ENCODE measurements at regions of chr5 and their contacts with region 1.

Region 1: DNA sequence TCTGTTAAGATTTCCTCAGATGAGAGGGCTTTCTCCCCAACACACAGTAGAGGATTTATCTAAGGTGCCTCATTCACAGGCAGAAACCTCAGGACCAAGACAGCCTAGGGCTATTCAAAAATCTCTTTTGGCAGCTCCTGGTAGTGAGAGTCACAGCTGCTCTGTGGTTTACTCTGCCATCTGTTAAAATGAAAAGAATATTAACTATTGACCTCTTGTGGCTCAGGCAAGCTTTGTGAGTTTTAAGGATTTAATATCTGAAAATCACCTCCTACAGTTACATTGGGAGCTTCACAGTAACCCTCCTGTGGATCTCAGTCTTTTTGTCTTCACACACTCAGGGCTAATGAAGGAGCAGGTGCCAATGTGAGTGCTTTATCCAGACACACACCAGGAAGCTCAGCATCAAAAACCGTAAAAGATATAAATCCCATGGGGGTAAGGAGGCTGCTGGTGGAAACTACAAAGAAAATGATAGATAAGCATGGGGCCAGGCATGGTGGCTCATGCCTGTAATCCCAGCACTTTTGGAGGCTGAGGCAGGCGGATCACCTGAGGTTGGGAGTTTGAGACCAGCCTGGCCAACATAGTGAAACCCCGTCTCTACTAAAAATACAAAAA is 29.7 kb downstream of the PPP1R2B start:
- DNase-seq: peak; percentile 89
- H3K4me3 ChIP-seq: peak overlapping the region; percentile 11
- H3K27ac ChIP-seq: peak overlapping the region; percentile 98
- H3K4me1 ChIP-seq: peaks cover 72% of the 10 kb centered on the region
- CTCF ChIP-seq: peak; percentile 47

Region 2: DNA sequence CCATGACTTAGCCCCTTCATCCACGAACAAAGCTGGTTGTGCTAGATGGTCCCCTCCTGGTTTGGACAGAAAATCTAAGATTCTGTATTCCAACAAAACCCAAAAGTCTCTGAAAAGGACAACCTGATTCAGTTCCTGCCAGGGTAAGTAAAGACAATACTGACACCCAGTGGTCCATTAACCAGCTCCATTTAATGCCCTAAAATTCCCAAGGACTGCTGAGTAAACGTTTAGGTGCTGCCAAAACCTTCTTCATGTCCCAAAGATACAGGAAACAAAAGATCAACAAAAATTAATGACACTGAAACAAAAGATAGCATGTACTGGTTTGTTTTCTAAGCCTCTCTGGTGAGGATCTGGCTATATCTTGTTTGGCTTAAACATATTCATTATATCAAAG is 55.0 kb before region 1 on chr5:
- CTCF ChIA-PET with region 1: no interaction called
- POLR2A ChIA-PET with region 1: interaction called, 7 read pairs
- intact Hi-C with region 1: loop called (anchors 1 kb)
- DNase-seq: peak; percentile 67
- H3K4me3 ChIP-seq: peak overlapping the region; percentile 48
- H3K27ac ChIP-seq: peak overlapping the region; percentile 77
- H3K4me1 ChIP-seq: peaks cover 89% of the 10 kb centered on the region
- CTCF ChIP-seq: peak; percentile 83

Region 3: DNA sequence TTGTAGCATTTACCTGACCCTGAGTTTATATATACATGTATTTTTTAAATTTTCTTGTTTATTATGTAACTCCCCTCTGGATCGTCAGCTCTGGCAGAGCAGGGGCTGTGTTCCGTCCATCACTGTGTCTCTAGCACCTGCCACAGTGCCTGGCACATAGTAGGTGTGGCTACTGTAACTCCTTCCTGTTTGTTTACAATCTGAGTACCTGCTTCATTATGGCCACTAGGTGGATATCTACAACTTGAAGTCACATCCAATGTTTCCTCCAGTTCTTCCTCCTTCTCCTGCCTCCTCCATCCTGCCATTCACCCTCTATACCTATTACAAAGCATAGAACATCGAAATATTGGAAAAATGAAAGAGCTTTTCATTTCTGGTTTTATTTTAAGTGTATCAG is 43.9 kb before region 1 on chr5:
- CTCF ChIA-PET with region 1: interaction called, 4 read pairs
- POLR2A ChIA-PET with region 1: interaction called, 44 read pairs
- intact Hi-C with region 1: loop called (anchors 2 kb)
- DNase-seq: peak; percentile 81
- H3K4me3 ChIP-seq: no peak overlapping the region
- H3K27ac ChIP-seq: peak overlapping the region; percentile 83
- H3K4me1 ChIP-seq: peaks cover 55% of the 10 kb centered on the region
- CTCF ChIP-seq: peak; percentile 86

Region 4: GRCh38 chr5:156865427-156865826 is 14.3 kb before region 1 on chr5:
- CTCF ChIA-PET with region 1: interaction called, 4 read pairs
- POLR2A ChIA-PET with region 1: interaction called, 100 read pairs
- intact Hi-C with region 1: no loop called
- DNase-seq: no peak
- H3K4me3 ChIP-seq: no peak overlapping the region
- H3K27ac ChIP-seq: no peak overlapping the region
- H3K4me1 ChIP-seq: peaks cover 26% of the 10 kb centered on the region
- CTCF ChIP-seq: no peak

Region 5: DNA sequence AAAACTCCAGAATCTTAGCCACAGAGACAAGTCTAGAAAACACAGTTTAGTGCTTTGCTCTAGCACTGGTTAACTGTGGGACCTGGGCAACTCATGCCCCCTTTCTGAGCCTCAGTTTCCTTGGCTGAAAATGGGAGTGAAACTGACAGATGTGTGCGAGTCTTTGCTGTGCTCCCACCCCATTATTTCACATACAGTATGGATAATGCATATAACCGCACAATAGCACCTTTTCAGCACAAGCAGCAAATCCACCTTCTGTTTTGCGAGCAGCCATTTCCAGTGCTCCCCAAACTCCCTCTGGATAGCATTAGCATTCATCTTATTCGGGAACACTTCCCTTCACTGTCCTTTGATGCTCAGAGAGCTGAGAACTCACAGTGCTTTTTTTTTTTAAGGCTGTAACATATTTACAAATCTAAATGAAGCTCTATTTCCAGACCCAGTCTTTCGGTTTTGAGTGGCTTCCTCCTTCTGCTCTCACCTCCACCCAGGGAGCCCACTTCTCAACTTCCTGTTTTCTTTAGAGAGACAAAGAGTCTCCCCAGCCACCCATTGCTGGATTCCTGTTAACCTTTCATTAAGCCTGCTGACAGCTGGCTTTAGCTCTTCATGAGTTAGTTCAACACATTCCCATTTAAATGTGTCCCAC is 34.1 kb after region 1 on chr5:
- CTCF ChIA-PET with region 1: interaction called, 4 read pairs
- POLR2A ChIA-PET with region 1: interaction called, 120 read pairs
- intact Hi-C with region 1: loop called (anchors 2 kb)
- DNase-seq: peak; percentile 92
- H3K4me3 ChIP-seq: peak overlapping the region; percentile 51
- H3K27ac ChIP-seq: peak overlapping the region; percentile 95
- H3K4me1 ChIP-seq: peaks cover 95% of the 10 kb centered on the region
- CTCF ChIP-seq: no peak

Region 6: GRCh38 chr5:156920042-156920860 is 40.5 kb after region 1 on chr5:
- CTCF ChIA-PET with region 1: no interaction called
- POLR2A ChIA-PET with region 1: interaction called, 120 read pairs
- intact Hi-C with region 1: loop called (anchors 2 kb)
- DNase-seq: no peak
- H3K4me3 ChIP-seq: peak overlapping the region; percentile 7
- H3K27ac ChIP-seq: peak overlapping the region; percentile 83
- H3K4me1 ChIP-seq: peaks cover 96% of the 10 kb centered on the region
- CTCF ChIP-seq: no peak

Region 7: DNA sequence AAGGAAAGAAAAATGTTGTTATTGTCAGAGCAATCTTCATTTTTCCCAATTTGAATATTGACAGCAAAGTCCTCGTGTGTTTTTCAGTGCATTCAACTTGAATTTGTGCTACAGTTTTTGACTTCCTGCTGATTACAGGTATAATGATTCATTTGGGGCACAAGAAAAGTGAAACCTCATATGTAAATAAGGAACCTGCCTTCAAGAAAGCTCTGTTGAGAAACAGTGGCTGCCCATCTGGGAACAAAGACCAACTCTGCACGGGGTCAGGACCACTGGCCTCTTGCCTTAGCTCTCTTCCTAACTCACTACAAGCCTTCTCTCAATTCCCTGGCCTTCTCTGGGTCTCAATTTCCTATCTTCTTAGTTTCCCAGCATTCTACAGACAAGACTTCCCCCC is 62.3 kb after region 1 on chr5:
- CTCF ChIA-PET with region 1: no interaction called
- POLR2A ChIA-PET with region 1: interaction called, 250 read pairs
- intact Hi-C with region 1: no loop called
- DNase-seq: peak; percentile 76
- H3K4me3 ChIP-seq: peak overlapping the region; percentile 18
- H3K27ac ChIP-seq: peak overlapping the region; percentile 70
- H3K4me1 ChIP-seq: peaks cover 37% of the 10 kb centered on the region
- CTCF ChIP-seq: no peak